ENCODE measurements at regions of chr4 and their contacts with region 1.

Region 1: DNA sequence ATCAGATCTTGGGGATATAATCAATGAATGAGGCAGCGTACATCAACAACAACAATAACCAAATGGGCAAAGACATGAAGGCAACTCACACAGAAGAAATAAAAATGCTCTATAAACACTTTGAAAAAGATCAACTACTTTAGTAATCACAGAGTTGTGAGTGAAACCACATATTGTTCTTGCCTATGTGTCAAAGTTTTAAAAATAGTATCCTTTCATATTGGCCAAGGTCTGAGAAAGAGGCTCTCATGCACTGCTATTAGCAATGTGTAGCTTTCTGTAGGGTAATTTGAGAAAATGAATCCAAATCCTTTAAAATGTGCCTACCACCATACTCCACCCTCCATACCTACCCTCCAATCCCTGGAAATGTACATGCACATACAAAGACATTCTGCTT is 25.0 kb downstream of the COQ2 start:
- DNase-seq: no peak
- ATAC-seq: peak; percentile 56 to 69 (median 62)
- H3K4me3 ChIP-seq: no peak overlapping the region
- H3K27ac ChIP-seq: no peak overlapping the region
- H3K4me1 ChIP-seq: peaks cover 0 to 28% (median 3%) of the 10 kb centered on the region in 12 donors
- H3K27me3 ChIP-seq: no peaks in the 10 kb centered on the region
- CTCF ChIP-seq: no peak
- POLR2A ChIP-seq: no peak

Region 2: GRCh38 chr4:83074086-83074704 is 185.4 kb before region 1 on chr4:
- intact Hi-C with region 1: loop called in 7 of 10 experiments (anchors 2 to 5 kb)
- DNase-seq: peak in 2 of 5 donors; percentile 12 to 23
- ATAC-seq: peak in 1 of 4 donors; percentile 54
- H3K4me3 ChIP-seq: no peak overlapping the region
- H3K27ac ChIP-seq: no peak overlapping the region
- H3K4me1 ChIP-seq: peaks cover 0 to 13% (median 0%) of the 10 kb centered on the region in 12 donors
- H3K27me3 ChIP-seq: no peaks in the 10 kb centered on the region
- CTCF ChIP-seq: peak; percentile 53 to 79 (median 69)
- POLR2A ChIP-seq: no peak